Activated naive CD4-positive, alpha-beta T cell treated with anti-CD3 and anti-CD28 coated beads for 36 hours (primary cell): ENCODE measurements at regions of chr10 and their contacts with region 1.

Region 1: DNA sequence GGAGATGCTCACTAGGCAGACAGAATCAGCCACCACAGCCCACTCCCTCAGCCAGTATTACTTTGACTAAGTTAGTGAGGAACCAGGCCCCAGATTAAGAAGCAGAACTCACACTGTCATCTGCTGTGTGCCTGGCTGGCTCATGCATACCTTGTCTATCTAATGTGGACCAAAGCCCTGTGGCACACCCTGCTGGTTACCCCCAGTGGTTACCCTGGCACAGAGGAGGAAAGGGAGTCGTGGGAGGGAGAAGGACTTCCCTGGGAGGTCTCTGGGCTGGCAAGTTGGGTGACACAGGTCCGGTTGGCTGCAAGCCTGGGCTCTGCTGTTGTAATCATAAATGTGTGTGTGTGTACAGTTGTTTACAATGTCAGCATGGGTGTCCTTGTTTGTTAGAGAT is 7.5 kb upstream of the SH2D4B start:
- DNase-seq: peak; percentile 84
- H3K4me3 Mint-ChIP-seq: peak overlapping the region; percentile 32
- H3K27ac Mint-ChIP-seq: peak overlapping the region; percentile 72
- H3K4me1 Mint-ChIP-seq: peaks cover 73% of the 10 kb centered on the region
- H3K27me3 Mint-ChIP-seq: no peaks in the 10 kb centered on the region

Region 2: DNA sequence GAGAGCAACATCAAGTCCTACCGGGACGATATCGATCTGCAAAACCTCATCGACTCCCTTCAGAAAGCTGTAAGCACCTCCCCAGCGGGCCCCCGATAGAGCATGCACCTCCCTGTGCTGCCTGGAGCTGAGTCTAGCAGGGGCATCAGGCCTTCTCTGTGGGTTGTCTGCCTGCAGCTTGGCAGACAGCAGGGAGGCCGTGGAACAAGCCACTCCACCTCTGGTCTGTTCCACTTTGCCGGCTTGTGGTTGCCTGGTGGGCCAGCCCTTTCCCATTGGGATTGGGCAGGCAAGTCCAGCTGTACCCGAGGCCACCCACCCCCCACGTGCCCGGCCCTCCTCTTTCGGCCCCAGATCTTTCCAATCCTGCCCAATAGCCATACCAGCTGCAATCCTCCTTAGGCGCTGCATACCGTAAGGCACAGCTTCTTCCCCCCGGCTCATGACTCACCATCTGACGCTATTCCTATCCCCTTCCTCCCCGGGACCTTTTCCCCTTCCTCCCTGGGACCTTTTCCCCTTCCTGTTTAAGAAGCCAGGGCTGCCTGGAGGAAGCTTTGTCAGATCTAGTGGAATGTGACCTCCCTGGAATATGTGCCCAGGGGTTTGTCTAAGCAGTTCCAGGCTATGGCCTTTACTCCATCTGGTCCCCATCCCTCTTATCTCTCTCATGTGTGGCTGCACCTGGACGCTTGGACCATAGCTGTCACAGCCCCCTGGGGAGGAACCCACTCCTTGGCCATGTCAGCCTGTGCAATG is 20.7 kb before region 1 on chr10:
- CTCF ChIA-PET with region 1: interaction called, 12 read pairs
- intact Hi-C with region 1: loop called (anchors 1 kb)
- DNase-seq: no peak
- H3K4me3 Mint-ChIP-seq: no peak overlapping the region
- H3K27ac Mint-ChIP-seq: peak overlapping the region; percentile 80
- H3K4me1 Mint-ChIP-seq: peaks cover 38% of the 10 kb centered on the region
- H3K27me3 Mint-ChIP-seq: no peaks in the 10 kb centered on the region

Region 3: DNA sequence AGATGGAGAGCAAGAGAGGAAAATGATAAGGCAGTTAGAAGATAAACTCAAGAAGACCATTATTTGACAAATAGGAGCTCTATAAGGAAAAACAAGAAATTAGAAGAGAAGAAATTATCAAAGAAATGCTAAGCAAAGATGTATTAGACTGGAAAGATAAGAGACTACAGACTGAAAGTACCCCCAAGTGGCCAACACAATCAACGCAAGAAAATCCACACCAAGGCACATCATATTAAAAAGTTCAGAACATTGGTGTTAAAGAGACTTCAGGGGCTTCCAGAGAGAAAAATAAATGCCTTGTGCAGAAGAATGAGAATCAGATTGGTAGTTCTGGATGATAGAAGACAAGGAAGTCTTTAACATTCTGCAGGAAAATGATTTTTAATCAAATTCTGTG is 53.4 kb after region 1 on chr10:
- CTCF ChIA-PET with region 1: no interaction called
- intact Hi-C with region 1: loop called (anchors 2 kb)
- DNase-seq: no peak
- H3K4me3 Mint-ChIP-seq: no peak overlapping the region
- H3K27ac Mint-ChIP-seq: no peak overlapping the region
- H3K4me1 Mint-ChIP-seq: peaks cover 6% of the 10 kb centered on the region
- H3K27me3 Mint-ChIP-seq: no peaks in the 10 kb centered on the region